Aorta (tissue), 5 donors: ENCODE measurements at regions of chr5 and their contacts with region 1.

Region 1: GRCh38 chr5:75236322-75237316 is at the start of gene ANKRD31:
- DNase-seq: peak; percentile 91 to 95
- ATAC-seq: peak; percentile 100
- H3K4me3 ChIP-seq: peak within 1 kb of the TSS; percentile 50 to 98
- H3K27ac ChIP-seq: peak within 1 kb of the TSS in 1 of 2 donors; percentile 82
- H3K4me1 ChIP-seq: no peaks in the 10 kb centered on the region
- H3K27me3 ChIP-seq: no peaks in the 10 kb centered on the region
- total RNA-seq, gene ANKRD31: 0.16 to 0.24 TPM

Region 2: DNA sequence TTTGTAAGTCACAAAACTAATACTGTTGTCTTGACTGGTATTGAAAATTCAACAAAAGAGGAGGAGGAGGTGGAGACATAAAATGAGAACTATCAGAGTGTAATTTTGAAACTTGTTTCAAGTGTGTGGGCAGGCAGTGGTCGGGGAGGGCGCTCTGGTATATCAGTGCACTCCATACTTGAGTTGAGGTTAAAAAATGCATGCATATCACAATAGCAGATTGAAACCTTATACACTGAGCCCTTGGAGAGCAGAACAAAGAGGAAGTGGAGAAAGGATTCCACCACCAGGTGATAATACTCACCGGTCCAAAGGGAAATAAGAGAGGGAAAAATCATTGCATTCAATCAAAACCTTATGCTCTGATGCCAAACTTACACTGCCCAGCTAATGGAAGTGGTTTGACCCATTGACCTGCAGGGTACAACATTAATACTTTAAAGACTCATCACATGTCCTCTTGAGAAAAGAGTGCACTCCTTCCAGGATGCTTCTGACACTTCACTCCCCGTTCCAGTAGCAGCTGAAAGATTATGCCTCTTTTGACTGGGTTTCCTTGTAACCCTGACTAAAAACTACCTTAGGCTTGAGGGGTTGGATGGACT is 291.0 kb before region 1 on chr5:
- intact Hi-C with region 1: loop called (anchors 10 kb)
- DNase-seq: no peak
- ATAC-seq: no peak
- H3K4me3 ChIP-seq: no peak overlapping the region
- H3K27ac ChIP-seq: no peak overlapping the region
- H3K4me1 ChIP-seq: peaks cover 0 to 3% of the 10 kb centered on the region in 2 donors
- H3K27me3 ChIP-seq: no peaks in the 10 kb centered on the region

Region 3: GRCh38 chr5:75021219-75021618 is 215.4 kb before region 1 on chr5:
- intact Hi-C with region 1: no loop called
- DNase-seq: no peak
- ATAC-seq: no peak
- H3K4me3 ChIP-seq: no peak overlapping the region
- H3K27ac ChIP-seq: no peak overlapping the region
- H3K4me1 ChIP-seq: no peaks in the 10 kb centered on the region
- H3K27me3 ChIP-seq: no peaks in the 10 kb centered on the region